ENCODE measurements at regions of chr15 and their contacts with region 1.

Region 1: GRCh38 chr15:75723847-75724660 is 11.4 kb upstream of the CSPG4 start:
- DNase-seq: no peak
- H3K4me3 ChIP-seq: no peak overlapping the region
- H3K27ac ChIP-seq: no peak overlapping the region
- H3K4me1 ChIP-seq: no peaks in the 10 kb centered on the region
- CTCF ChIP-seq: no peak

Region 2: DNA sequence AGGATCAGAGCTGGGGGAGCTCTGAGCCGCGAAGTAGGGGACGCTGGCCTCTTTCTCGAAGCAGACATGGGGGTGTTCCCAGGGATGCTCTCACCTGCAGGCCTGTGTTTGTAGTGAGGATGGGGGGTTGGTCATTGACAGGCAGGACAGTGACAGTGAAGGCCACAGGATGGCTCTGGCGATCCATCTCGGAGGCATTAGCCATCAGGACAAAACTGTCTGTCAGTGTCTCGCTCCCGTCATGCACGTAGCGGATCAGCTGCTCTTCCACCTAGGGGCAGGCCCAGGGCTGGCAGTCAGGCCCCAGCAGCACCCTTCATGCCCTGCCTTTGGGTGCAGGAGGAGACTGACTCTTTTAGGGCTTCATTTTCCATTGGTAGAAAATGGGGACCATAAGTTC is 39.4 kb before region 1 on chr15:
- CTCF ChIA-PET with region 1: no interaction called
- POLR2A ChIA-PET with region 1: no interaction called
- intact Hi-C with region 1: loop called (anchors 5 kb)
- DNase-seq: no peak
- H3K4me3 ChIP-seq: no peak overlapping the region
- H3K27ac ChIP-seq: no peak overlapping the region
- H3K4me1 ChIP-seq: no peaks in the 10 kb centered on the region
- CTCF ChIP-seq: no peak

Region 3: DNA sequence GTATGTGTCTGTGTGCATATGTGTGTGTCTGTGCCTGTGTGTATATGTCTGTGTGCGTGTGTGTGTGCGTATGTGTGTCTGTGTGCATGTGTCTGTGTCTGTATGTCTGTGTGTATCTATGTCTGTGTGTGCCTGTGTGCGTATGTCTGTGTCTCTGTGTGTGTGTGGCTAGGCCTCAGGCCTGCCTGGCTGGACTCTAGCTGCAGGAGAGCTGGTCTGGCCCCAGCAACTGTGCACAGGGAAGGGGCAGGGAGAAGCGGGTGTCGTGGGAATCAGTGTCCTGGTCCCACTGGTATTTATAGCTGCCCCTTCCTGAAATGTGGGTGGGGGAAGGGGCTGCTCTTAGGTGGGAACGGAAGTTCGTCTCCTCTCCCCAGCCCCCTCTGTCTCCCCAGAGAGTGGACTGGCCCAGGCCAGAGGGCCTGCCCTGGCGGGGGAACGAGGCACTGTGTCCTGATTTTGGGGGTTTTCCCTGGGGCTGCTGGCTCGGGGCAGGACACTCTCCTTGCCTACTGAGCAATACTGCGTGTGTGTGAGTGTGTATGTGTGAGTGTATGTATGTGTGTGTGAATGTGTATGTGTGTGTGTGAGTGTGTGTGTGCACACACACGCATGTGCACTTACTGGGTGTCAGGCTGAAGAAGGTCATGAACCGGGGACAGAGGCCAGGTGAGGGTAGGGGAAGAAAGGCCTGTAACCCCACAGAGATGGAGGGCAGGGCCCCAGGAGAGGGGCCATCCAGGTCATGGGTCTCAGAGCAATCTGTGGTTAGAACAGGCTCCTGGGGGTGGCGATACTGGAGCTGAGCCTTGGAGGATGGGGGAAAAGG is 18.0 kb before region 1 on chr15:
- CTCF ChIA-PET with region 1: no interaction called
- POLR2A ChIA-PET with region 1: no interaction called
- intact Hi-C with region 1: no loop called
- DNase-seq: no peak
- H3K4me3 ChIP-seq: no peak overlapping the region
- H3K27ac ChIP-seq: no peak overlapping the region
- H3K4me1 ChIP-seq: no peaks in the 10 kb centered on the region
- CTCF ChIP-seq: no peak

Region 4: DNA sequence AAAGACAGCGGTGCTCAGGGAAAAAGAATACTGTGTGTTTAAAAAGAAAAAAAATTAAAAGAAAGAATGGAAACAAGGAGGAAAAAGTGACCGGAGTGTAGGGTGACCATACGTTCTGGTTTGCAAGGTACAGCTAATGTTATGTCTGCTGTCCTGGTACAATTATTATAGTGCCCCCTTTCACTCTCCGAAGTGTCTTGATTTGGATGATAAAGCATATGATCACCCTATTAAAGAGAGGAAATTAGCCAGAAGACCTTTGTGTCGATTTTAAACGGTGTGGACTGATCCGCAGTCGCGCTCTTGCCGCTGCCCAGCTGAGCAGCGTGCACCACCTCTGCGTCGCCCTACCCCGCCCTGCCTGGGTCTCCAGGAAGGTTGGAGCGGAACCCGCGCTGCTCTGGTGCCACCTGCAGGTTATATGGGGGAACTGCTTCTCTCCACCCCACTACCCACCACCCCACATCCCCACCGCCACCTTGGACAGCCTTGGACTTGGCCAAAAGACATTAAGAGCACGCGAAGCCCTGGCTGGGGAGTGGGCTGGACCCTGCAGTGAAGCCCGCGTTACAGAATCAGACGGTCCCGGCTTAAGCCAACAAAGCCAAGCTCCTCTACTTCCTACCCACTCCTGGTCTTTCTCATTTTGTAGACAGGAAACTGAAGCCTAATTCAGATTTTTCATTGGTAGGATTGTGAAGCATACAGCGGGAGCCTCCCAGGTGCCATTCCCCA is 78.0 kb after region 1 on chr15:
- CTCF ChIA-PET with region 1: no interaction called
- POLR2A ChIA-PET with region 1: no interaction called
- intact Hi-C with region 1: loop called (anchors 1 kb)
- DNase-seq: peak; percentile 71
- H3K4me3 ChIP-seq: no peak overlapping the region
- H3K27ac ChIP-seq: no peak overlapping the region
- H3K4me1 ChIP-seq: no peaks in the 10 kb centered on the region
- CTCF ChIP-seq: peak; percentile 84

Region 5: GRCh38 chr15:75921729-75922703 is 198.0 kb after region 1 on chr15:
- CTCF ChIA-PET with region 1: no interaction called
- POLR2A ChIA-PET with region 1: no interaction called
- intact Hi-C with region 1: loop called (anchors 10 kb)
- DNase-seq: peak; percentile 52
- H3K4me3 ChIP-seq: no peak overlapping the region
- H3K27ac ChIP-seq: no peak overlapping the region
- H3K4me1 ChIP-seq: no peaks in the 10 kb centered on the region
- CTCF ChIP-seq: peak; percentile 77

Region 6: GRCh38 chr15:76139368-76140073 is 415.5 kb after region 1 on chr15:
- CTCF ChIA-PET with region 1: no interaction called
- POLR2A ChIA-PET with region 1: no interaction called
- intact Hi-C with region 1: loop called (anchors 10 kb)
- DNase-seq: peak; percentile 67
- H3K4me3 ChIP-seq: no peak overlapping the region
- H3K27ac ChIP-seq: no peak overlapping the region
- H3K4me1 ChIP-seq: no peaks in the 10 kb centered on the region
- CTCF ChIP-seq: peak; percentile 89

Measured in OCI-LY7 (cell line).